Endothelial cell of umbilical vein (primary cell): ENCODE measurements at regions of chr15 and their contacts with region 1.

Region 1: DNA sequence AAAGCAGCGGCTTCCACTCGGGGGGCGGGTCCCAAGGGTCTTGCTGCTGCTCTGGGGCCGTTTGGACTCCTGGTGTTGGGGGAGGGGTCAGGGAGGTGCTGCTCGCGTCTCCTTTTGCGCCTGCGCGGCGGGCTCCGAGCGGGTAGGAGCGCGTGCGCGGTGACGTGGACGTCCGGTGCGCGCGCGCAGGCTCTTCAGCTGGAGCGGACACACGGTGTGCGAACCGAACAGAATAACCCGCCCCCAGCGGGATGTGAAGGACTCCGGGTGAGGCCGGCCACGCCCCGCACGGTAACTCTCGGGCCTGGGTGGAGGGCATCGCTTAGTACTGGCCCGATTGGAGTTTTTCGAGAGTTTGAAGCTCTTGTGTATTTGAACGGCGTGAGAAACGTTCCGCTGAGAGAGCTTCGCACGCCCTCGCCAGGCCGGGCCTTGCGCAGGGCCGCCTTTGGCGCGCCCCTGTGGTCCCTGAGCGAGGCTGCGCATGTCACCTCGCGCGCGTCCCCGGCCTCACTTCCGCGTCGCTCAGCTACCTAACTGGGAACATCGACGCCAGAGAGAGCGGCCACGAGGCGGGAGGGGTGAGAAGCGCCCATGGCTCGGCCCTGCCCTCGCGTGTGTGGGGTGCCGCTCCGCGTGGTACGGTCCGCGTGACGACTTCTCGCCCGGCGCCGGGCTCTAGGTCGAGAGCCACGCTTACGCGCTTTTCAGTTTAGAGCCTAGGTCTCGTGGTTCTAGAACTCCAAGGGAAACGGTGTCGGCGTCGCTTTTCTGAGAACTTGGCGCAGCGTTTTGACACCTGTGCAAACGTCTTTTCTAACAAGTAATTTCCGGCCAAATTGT is at the start of gene MGA:
- DNase-seq: peak; percentile 93
- H3K4me3 ChIP-seq: peak within 1 kb of the TSS; percentile 8 to 42 (median 40)
- H3K27ac ChIP-seq: peak within 1 kb of the TSS; percentile 66
- H3K4me1 ChIP-seq: peaks cover 26% of the 10 kb centered on the region
- H3K27me3 ChIP-seq: peaks cover 2 to 14% of the 10 kb centered on the region in 2 experiments
- CTCF ChIP-seq: no peak
- POLR2A ChIP-seq: peak; percentile 59
- total RNA-seq, gene MGA: 34.0 and 36.5 TPM in 2 replicates

Region 2: GRCh38 chr15:41621200-41622193 is 39.0 kb before region 1 on chr15:
- CTCF ChIA-PET with region 1: no interaction called
- POLR2A ChIA-PET with region 1: no interaction called
- dilution Hi-C with region 1: no loop called
- intact Hi-C with region 1: loop called (anchors 2 kb)
- DNase-seq: peak; percentile 80
- H3K4me3 ChIP-seq: peak overlapping the region; percentile 19 to 39 (median 28)
- H3K27ac ChIP-seq: no peak overlapping the region
- H3K4me1 ChIP-seq: peaks cover 4% of the 10 kb centered on the region
- H3K27me3 ChIP-seq: no peaks in the 10 kb centered on the region
- CTCF ChIP-seq: no peak
- POLR2A ChIP-seq: peak; percentile 22